ENCODE measurements at regions of chr12 and their contacts with region 1.

Region 1: DNA sequence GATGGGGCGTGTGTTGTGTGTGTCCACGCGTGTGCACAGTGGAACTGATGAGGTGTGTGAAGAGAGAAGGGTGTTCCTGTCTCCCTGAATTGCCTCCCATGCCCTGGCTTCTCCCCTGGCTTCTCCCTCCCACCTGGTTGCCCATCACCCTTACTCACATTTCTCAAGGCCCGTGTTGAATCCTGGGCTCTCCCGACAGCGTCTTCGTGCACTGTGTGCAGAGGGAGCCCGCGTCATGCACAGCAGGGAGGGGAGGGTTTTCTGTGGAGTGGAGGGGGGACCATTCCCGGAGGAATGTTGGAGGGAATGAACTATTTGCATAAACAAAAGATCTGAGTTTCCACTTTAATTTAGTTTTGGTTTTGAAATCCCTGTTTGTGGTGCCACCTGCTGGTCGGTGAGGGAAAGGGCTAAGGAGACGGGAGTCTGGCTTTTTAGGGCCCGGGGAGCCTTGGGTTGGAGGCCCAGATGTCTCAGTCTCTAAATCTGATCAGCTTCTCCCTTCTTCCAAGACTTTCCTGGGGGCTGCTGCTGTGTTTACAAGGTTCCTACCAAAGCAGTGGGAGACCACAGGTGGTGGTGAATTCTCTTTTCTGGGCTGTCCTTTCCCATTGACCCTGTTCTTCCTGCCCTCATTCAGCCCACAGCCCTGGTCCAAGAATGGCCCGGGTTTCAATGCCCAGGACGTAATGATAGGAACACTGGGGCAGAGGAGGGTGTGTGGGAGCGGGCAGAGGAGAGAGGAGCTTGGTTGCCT is at the start of gene C1R:
- DNase-seq: peak; percentile 53
- ATAC-seq: peak; percentile 80
- H3K4me3 Mint-ChIP-seq: peak within 1 kb of the TSS; percentile 87
- H3K27ac Mint-ChIP-seq: peak within 1 kb of the TSS; percentile 61
- H3K4me1 Mint-ChIP-seq: peaks cover 8% of the 10 kb centered on the region
- H3K27me3 Mint-ChIP-seq: no peaks in the 10 kb centered on the region
- CTCF ChIP-seq: no peak
- total RNA-seq, gene C1R: 0.54 and 0.78 TPM in 2 replicates

Region 2: DNA sequence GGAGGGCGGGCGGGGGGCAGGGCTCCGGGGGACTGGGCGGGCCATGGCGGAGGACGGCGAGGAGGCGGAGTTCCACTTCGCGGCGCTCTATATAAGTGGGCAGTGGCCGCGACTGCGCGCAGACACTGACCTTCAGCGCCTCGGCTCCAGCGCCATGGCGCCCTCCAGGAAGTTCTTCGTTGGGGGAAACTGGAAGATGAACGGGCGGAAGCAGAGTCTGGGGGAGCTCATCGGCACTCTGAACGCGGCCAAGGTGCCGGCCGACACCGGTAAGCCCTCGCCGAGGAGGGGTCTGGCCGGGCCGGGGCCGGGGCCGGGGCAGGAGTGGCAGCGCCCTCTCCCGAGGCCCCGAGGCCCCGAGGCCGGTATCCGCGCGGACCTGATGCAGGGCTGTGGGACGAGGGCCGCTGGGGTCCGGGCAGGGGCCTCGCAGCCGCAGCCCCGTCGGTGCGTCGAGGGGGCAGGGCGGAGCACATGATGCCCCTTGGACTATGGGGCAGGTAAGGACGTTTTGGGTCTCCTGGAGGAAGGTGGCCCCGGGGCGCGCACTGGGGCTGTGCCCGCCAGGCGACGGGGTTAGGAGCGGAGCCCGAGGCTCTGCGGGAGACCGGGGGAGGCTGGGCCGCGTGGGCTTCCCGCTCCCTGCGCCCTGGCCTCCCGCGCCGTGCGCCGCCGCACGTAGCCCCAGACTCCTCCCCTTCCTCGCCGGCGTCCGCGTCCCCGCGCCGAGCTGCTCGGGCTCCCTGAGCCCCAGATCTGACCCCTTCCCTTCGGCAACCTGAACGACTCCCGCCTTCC is 224.8 kb before region 1 on chr12 and contains the start of gene TPI1:
- CTCF ChIA-PET with region 1: interaction called, 6 read pairs
- POLR2A ChIA-PET with region 1: interaction called, 3 read pairs
- intact Hi-C with region 1: loop called (anchors 1 kb)
- DNase-seq: peak; percentile 65
- ATAC-seq: peak; percentile 78
- H3K4me3 Mint-ChIP-seq: peak within 1 kb of the TSS; percentile 89
- H3K27ac Mint-ChIP-seq: peak within 1 kb of the TSS; percentile 84
- H3K4me1 Mint-ChIP-seq: peaks cover 51% of the 10 kb centered on the region
- H3K27me3 Mint-ChIP-seq: no peaks in the 10 kb centered on the region
- CTCF ChIP-seq: no peak
- total RNA-seq, gene TPI1: 306 and 318 TPM in 2 replicates

Region 3: DNA sequence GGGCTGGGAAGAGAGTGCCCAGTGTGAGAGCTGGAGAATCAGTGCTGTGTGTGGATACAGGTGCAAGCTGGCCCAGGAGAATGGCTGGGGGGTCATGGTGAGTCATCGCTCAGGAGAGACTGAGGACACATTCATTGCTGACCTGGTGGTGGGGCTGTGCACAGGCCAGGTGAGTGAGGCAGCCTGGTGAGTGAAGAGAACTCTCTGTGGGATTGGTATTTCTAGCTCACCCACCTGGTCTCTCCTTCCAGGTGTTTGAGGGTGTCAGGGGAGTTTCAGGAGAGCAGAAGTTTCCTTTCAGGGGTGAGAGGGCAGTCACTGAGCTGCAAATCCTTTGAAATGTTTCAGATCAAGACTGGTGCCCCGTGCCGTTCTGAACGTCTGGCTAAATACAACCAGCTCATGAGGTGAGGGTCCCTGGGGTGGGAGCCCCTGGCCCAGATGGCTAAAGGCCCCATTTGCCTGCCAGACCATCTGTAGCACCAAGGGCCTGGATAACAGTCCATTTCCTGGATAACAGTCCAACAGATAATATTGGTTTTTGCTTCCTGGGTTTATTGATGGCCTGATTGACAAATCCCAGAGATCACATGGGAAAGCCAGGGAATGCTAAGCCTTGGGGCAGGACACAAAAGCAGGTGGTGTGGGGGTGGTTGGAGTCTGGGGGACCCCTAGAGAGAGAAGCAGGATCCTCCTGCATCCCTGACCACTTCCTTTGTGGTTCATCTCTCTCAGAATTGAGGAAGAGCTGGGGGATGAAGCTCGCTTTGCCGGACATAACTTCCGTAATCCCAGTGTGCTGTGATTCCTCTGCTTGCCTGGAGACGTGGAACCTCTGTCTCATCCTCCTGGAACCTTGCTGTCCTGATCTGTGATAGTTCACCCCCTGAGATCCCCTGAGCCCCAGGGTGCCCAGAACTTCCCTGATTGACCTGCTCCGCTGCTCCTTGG is 170.1 kb before region 1 on chr12:
- CTCF ChIA-PET with region 1: interaction called, 7 read pairs
- POLR2A ChIA-PET with region 1: interaction called, 12 read pairs
- intact Hi-C with region 1: loop called (anchors 1 kb)
- DNase-seq: no peak
- ATAC-seq: peak; percentile 49
- H3K4me3 Mint-ChIP-seq: peak overlapping the region; percentile 9
- H3K27ac Mint-ChIP-seq: peak overlapping the region; percentile 78
- H3K4me1 Mint-ChIP-seq: peaks cover 50% of the 10 kb centered on the region
- H3K27me3 Mint-ChIP-seq: no peaks in the 10 kb centered on the region
- CTCF ChIP-seq: no peak

Region 4: GRCh38 chr12:6927379-6928024 is 164.9 kb before region 1 on chr12 and contains the start of gene ATN1:
- CTCF ChIA-PET with region 1: interaction called, 7 read pairs
- POLR2A ChIA-PET with region 1: interaction called, 12 read pairs
- intact Hi-C with region 1: loop called (anchors 1 kb)
- DNase-seq: peak; percentile 58
- ATAC-seq: peak; percentile 42
- H3K4me3 Mint-ChIP-seq: peak within 1 kb of the TSS; percentile 86
- H3K27ac Mint-ChIP-seq: peak within 1 kb of the TSS; percentile 86
- H3K4me1 Mint-ChIP-seq: peaks cover 54% of the 10 kb centered on the region
- H3K27me3 Mint-ChIP-seq: no peaks in the 10 kb centered on the region
- CTCF ChIP-seq: no peak
- total RNA-seq, gene ATN1: 42.8 and 50.9 TPM in 2 replicates

Region 5: GRCh38 chr12:7018350-7019042 is 73.9 kb before region 1 on chr12 and contains the start of gene LPCAT3:
- CTCF ChIA-PET with region 1: no interaction called
- POLR2A ChIA-PET with region 1: interaction called, 3 read pairs
- intact Hi-C with region 1: loop called (anchors 1 kb)
- DNase-seq: peak; percentile 94
- ATAC-seq: peak; percentile 96
- H3K4me3 Mint-ChIP-seq: peak within 1 kb of the TSS; percentile 87
- H3K27ac Mint-ChIP-seq: peak within 1 kb of the TSS; percentile 77
- H3K4me1 Mint-ChIP-seq: peaks cover 20% of the 10 kb centered on the region
- H3K27me3 Mint-ChIP-seq: no peaks in the 10 kb centered on the region
- CTCF ChIP-seq: no peak
- total RNA-seq, gene LPCAT3: 19.3 and 21.3 TPM in 2 replicates

Measured in activated B cell treated with CpG ODN at 0.5 μM for 24 hours (primary cell).